ENCODE measurements at regions of chr1 and their contacts with region 1.

Region 1: GRCh38 chr1:24481101-24481500 is 21.5 kb upstream of the RCAN3 start:
- DNase-seq: no peak
- H3K4me3 ChIP-seq: no peak overlapping the region
- CTCF ChIP-seq: no peak

Region 2: GRCh38 chr1:24491577-24492360 is 10.7 kb after region 1 on chr1:
- CTCF ChIA-PET with region 1: interaction called, 16 read pairs
- POLR2A ChIA-PET with region 1: no interaction called
- DNase-seq: no peak
- H3K4me3 ChIP-seq: no peak overlapping the region
- CTCF ChIP-seq: no peak